ENCODE measurements at regions of chr5 and their contacts with region 1.

Region 1: DNA sequence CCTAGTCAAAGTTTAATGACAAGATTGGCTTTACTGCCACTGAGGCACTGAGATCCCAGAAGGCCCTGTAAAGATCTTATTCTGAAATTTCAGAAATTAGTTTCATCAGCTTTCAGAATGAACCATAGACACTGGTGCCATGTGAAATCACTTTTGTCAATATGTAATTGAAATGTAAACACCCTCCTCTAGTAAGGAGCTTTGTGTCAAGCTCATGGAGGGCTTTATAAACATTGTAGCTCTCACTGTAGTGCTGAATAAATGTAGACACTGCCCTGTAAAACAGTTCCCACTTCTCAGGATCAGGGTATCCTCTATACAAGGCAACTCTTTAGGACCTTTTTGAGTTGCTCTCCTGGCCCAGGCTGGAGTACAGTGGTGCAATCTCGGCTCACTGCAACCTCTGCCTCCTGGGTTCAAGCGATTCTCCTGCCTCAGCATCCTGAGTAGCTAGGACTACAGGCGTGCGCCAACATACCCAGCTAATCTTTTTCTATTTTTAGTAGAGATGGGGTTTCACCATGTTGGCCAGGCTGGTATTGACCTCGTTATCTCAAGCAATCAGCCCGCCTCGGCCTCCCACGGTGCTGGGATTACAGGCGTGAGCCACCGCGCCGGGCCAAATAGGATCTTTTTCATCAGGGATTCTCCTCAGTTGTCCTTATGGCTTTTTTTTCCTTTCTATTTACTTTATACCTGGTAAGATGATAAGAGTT is 1823.9 kb upstream of the CDH9 start:
- DNase-seq: no peak
- ATAC-seq: no peak
- H3K4me3 ChIP-seq: no peak overlapping the region
- H3K27ac ChIP-seq: no peak overlapping the region
- H3K4me1 ChIP-seq: no peaks in the 10 kb centered on the region
- H3K27me3 ChIP-seq: no peaks in the 10 kb centered on the region

Region 2: DNA sequence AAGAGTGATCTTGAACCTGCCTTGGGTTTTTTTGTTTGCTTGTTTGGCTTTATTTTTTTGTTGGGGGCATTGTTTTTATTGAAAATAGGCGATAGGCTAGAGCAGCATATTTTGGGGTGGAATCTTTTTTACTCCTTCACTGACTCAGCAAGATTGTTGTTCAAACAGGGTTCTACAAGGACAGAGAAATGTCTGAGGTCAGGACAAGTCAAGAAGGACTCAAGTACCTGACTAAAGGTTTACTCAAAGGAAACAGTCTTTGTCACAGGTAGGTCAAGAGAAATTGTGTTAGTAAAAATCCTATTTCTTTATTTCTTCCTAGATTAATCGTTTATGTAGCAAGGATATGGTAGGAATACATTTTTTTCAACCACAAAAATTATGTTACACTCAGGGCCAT is 259.9 kb before region 1 on chr5:
- intact Hi-C with region 1: no loop called
- DNase-seq: no peak
- ATAC-seq: no peak
- H3K4me3 ChIP-seq: no peak overlapping the region
- H3K27ac ChIP-seq: no peak overlapping the region
- H3K4me1 ChIP-seq: no peaks in the 10 kb centered on the region
- H3K27me3 ChIP-seq: no peaks in the 10 kb centered on the region

Region 3: GRCh38 chr5:28850320-28850921 is 11.9 kb before region 1 on chr5:
- intact Hi-C with region 1: loop called in 1 of 2 experiments (anchors 1 kb)
- DNase-seq: no peak
- ATAC-seq: no peak
- H3K4me3 ChIP-seq: no peak overlapping the region
- H3K27ac ChIP-seq: no peak overlapping the region
- H3K4me1 ChIP-seq: no peaks in the 10 kb centered on the region
- H3K27me3 ChIP-seq: no peaks in the 10 kb centered on the region

Measured in aorta (tissue), 5 donors.